ENCODE measurements at regions of chrX and their contacts with region 1.

Region 1: DNA sequence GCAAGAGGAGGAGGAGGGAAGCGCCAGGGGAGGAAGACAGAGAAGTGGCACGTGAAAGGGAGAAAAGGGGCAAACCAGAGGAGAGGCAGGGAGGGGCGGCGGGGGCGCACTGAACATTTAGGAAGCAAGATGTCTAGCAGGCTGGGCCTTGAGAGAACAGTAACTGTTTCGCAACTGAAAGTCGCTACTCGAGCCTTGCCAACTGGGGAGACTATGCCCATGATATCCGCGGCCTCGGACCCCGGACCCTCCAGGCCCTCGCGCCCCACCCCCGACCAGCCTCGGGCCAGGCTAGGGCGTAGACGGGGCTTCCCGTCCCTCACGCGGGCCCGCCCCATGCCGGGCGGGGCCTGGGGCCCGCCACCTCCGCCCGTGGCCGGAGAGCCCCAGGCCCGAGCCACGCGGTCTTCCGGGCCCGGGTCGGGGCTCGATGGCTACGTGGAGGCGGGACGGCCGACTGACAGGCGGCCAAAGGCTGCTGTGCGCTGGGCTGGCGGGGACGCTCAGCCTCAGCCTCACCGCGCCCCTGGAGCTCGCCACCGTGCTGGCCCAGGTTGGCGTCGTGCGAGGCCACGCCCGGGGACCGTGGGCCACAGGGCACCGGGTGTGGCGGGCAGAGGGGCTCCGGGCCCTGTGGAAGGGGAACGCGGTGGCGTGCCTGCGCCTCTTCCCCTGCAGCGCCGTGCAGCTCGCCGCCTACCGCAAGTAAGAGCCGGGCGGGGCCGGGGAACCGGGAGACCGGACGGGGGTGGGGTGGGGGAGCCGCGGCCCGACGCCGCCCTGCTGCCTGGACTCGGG is at the start of gene SLC25A43:
- DNase-seq: peak; percentile 11
- H3K4me3 ChIP-seq: peak within 1 kb of the TSS; percentile 50 to 66 (median 56)
- H3K27ac ChIP-seq: peak within 1 kb of the TSS; percentile 33
- H3K4me1 ChIP-seq: peaks cover 10% of the 10 kb centered on the region
- H3K27me3 ChIP-seq: no peaks in the 10 kb centered on the region
- CTCF ChIP-seq: no peak
- total RNA-seq, gene SLC25A43: 18.9 to 20.7 TPM

Region 2: DNA sequence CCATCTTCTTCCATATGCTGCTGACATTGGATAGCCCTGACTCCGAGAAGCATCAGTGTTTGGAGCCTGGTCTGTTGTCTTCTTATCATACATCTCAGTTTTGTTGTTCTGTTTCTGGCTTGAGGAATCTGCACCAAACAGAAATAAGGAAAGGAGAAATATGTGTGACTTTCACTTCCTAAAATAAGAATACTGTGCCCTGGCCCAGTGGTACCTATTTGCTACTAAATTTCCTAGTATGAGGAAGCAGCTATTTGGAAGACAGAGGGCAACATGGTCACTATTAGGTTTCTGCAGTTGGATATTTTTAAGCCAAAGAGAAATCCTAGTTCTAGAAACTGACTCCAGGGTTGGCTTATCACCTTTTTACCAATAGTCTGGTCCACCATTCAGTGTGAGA is 309.6 kb before region 1 on chrX:
- CTCF ChIA-PET with region 1: no interaction called
- dilution Hi-C with region 1: no loop called
- in situ Hi-C with region 1: no loop called
- intact Hi-C with region 1: no loop called
- DNase-seq: no peak
- H3K4me3 ChIP-seq: no peak overlapping the region
- H3K27ac ChIP-seq: no peak overlapping the region
- H3K4me1 ChIP-seq: no peaks in the 10 kb centered on the region
- H3K27me3 ChIP-seq: peaks cover 5% of the 10 kb centered on the region
- CTCF ChIP-seq: no peak

Region 3: GRCh38 chrX:119252716-119253115 is 146.5 kb before region 1 on chrX:
- CTCF ChIA-PET with region 1: interaction called, 11 read pairs
- dilution Hi-C with region 1: no loop called
- in situ Hi-C with region 1: no loop called
- intact Hi-C with region 1: no loop called
- DNase-seq: no peak
- H3K4me3 ChIP-seq: no peak overlapping the region
- H3K27ac ChIP-seq: no peak overlapping the region
- H3K4me1 ChIP-seq: no peaks in the 10 kb centered on the region
- H3K27me3 ChIP-seq: no peaks in the 10 kb centered on the region
- CTCF ChIP-seq: no peak